A549 (cell line): ENCODE measurements at regions of chr2 and their contacts with region 1.

Region 1: DNA sequence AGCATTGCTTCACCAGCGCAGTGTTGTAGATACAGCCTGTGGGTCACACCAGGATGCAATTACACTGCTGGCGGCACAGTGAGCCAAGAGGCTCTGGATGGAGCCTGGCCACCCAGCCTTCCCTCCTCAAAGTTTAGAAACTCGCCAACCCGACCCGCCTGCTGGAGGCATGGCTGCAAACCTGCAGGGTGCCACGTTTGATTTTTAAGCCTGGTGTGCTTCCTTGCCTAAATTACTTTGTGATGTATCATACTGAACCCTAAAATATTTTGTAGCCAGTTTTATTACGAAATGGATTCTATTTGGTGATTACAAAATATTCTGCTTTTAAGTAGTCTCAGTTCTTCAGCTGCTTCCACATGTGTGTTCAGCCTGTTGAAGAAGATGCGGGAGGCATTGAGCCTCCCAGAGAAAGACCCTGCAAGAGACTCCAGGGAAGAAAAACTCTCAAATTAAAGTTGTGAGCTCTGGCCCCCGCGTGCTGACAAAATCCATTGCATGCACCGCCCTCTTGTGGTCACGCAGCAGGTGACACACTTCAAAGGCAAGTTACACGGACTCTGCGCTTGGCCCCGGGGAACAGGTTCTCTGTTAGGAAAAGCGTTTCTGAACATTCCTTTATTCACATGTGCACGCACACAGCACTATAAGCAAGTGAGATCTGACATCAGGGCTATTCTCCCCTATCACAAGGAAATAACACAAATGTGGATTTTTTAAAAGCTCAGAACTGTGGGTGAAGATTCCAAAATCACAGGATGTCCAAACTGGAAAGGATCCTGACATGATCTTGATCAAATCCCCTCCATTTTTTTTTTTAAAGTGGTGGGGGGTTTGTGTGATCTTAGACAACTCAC is 63.0 kb upstream of the TWIST2 start:
- DNase-seq: peak; percentile 60 to 76
- ATAC-seq: peak; percentile 83 to 94; a peak in 5 of 6 replicates
- H3K4me3 ChIP-seq: no peak overlapping the region
- H3K27ac ChIP-seq: peak overlapping the region; percentile 54 to 68
- H3K4me1 ChIP-seq: peaks cover 9% of the 10 kb centered on the region; the same call in 2 of the 3 replicates
- CTCF ChIP-seq: peak; percentile 93
- EP300 ChIP-seq: no peak
- POLR2A ChIP-seq: no peak
- RAD21 ChIP-seq: peak; percentile 95 to 96

Region 2: GRCh38 chr2:238370823-238371372 is 414.0 kb before region 1 on chr2:
- CTCF ChIA-PET with region 1: interaction called, 79 read pairs
- POLR2A ChIA-PET with region 1: no interaction called
- DNase-seq: peak; percentile 35 to 67
- ATAC-seq: peak; percentile 94 to 97
- H3K4me3 ChIP-seq: no peak overlapping the region
- H3K27ac ChIP-seq: peak overlapping the region; percentile 21 to 36; a peak in 1 of 6 replicates
- H3K4me1 ChIP-seq: peaks cover 5% of the 10 kb centered on the region; the same call in 1 of the 3 replicates
- CTCF ChIP-seq: peak; percentile 80
- EP300 ChIP-seq: no peak
- POLR2A ChIP-seq: no peak
- RAD21 ChIP-seq: peak; percentile 89 to 96

Region 3: DNA sequence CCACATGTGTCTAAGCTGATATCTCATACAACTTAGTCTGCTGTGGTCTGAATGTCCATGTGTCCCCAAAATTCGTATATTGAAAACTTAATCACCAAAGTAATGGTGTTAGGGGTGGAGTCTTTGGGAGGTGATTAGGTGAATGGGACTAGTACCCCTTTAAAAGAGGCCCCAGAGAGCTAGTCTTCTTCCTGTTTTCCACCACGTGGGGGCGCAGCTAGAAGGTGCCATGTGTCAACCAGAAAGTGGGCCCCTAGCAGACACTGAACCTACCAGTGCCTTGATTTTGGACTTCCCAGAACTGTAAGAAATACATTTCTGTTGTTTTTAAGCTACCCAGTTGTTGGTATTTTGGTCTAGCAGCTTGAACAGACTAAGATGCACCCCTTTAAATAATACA is 271.6 kb before region 1 on chr2:
- CTCF ChIA-PET with region 1: interaction called, 19 read pairs
- POLR2A ChIA-PET with region 1: no interaction called
- DNase-seq: peak; percentile 46 to 64
- ATAC-seq: peak; percentile 52 to 84; a peak in 3 of 6 replicates
- H3K4me3 ChIP-seq: no peak overlapping the region
- H3K27ac ChIP-seq: no peak overlapping the region
- H3K4me1 ChIP-seq: peaks cover 16% of the 10 kb centered on the region
- CTCF ChIP-seq: peak; percentile 55
- EP300 ChIP-seq: no peak
- POLR2A ChIP-seq: no peak
- RAD21 ChIP-seq: peak; percentile 67 to 68

Region 4: GRCh38 chr2:238754259-238754658 is 30.6 kb before region 1 on chr2:
- CTCF ChIA-PET with region 1: interaction called, 11 read pairs
- POLR2A ChIA-PET with region 1: no interaction called
- DNase-seq: peak in 1 of 2 experiments; percentile 18
- ATAC-seq: peak in 1 of 2 experiments; percentile 54; a peak in 2 of 6 replicates
- H3K4me3 ChIP-seq: no peak overlapping the region
- H3K27ac ChIP-seq: no peak overlapping the region
- H3K4me1 ChIP-seq: no peaks in the 10 kb centered on the region
- CTCF ChIP-seq: no peak
- EP300 ChIP-seq: no peak
- POLR2A ChIP-seq: no peak
- RAD21 ChIP-seq: no peak

Region 5: DNA sequence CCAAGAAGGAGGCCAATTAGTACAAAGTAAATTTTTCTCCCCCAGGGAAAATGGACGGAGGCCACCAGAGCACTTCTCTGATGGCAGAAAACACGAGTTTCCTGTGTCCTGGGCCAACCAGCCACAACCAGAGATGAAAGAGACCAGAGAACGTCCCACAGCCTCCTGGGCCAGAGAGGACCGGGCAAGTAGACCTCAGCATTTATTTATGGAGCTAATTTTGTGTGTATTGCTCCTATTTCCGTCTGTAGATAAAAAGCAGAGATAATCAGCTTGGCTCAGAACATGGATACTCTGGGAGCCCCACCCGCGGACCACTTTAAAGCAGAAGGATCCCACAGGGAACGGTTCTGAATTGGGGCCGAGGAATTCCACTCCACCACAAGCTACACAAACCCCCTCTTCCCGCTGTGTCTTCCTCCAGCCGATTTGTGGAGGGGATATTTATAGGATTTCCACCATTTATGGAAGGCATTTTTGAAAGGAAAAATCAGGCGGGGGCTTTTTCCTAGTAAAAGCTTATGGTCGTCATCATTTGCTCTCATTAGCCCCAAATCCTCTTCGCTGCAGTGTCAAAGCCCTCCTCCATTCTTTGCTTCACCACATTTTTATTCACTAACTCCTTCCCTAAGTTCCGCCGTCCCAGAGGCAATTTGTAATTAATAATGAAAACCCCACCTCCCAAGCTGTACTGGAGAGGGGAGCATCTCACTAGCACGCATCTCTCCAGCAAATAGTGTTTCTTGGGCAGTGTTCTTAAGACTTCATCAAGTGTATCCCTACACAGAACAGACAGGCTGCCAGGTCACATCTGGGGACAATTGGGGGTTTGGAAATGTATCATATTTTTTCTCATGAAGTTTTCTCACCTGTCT is 19.3 kb after region 1 on chr2:
- CTCF ChIA-PET with region 1: interaction called, 23 read pairs
- POLR2A ChIA-PET with region 1: no interaction called
- DNase-seq: no peak
- ATAC-seq: no peak
- H3K4me3 ChIP-seq: no peak overlapping the region
- H3K27ac ChIP-seq: no peak overlapping the region
- H3K4me1 ChIP-seq: no peaks in the 10 kb centered on the region
- CTCF ChIP-seq: no peak
- EP300 ChIP-seq: no peak
- POLR2A ChIP-seq: no peak
- RAD21 ChIP-seq: no peak

Region 6: DNA sequence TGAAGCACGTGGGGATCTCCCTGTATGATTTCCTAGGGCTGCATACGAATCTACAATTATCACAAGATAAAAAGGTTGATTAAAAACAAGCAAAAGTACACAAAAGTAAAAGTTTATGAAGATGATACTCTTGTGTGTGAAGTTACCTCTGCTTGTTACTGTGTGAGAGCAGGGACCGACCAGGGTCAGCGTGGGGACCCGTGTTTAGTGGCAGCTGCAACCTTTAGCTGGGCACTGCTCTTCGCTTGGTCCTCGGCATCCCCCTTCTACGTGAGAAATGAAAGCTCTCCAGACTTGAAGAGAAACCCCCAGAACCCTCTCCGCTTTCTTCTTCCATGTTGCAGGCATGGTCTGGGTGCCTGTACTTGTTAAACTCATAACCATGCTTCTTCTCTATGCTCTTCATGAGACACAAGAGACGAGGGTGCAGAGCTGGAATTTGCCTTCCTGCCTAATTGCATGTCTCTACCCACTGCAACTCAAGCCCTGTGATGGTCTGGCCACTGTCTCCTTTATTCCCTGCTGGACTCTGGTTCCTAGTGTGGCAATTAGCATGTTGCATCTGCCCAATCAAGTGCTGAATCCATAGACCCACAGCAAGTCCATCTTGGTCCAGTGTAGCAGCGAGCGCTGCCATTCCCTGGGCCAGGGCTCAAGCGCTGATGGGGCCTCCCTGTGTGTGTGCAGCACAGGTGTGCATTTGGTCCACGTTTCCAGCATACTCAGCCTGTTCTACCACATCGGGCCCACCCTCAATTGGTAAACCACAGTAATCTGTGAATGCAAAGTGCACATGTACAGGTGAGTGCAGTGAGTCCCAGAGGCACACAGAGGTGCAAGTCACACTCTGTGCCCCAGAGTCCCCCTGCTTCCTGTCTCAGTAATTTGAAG is 151.5 kb after region 1 on chr2:
- CTCF ChIA-PET with region 1: no interaction called
- POLR2A ChIA-PET with region 1: no interaction called
- DNase-seq: no peak
- ATAC-seq: peak in 1 of 2 experiments; percentile 23; a peak in 2 of 6 replicates
- H3K4me3 ChIP-seq: no peak overlapping the region
- H3K27ac ChIP-seq: no peak overlapping the region
- H3K4me1 ChIP-seq: no peaks in the 10 kb centered on the region
- CTCF ChIP-seq: no peak
- EP300 ChIP-seq: no peak
- POLR2A ChIP-seq: no peak
- RAD21 ChIP-seq: no peak